IMR-90 (cell line): ENCODE measurements at regions of chr7 and their contacts with region 1.

Region 1: DNA sequence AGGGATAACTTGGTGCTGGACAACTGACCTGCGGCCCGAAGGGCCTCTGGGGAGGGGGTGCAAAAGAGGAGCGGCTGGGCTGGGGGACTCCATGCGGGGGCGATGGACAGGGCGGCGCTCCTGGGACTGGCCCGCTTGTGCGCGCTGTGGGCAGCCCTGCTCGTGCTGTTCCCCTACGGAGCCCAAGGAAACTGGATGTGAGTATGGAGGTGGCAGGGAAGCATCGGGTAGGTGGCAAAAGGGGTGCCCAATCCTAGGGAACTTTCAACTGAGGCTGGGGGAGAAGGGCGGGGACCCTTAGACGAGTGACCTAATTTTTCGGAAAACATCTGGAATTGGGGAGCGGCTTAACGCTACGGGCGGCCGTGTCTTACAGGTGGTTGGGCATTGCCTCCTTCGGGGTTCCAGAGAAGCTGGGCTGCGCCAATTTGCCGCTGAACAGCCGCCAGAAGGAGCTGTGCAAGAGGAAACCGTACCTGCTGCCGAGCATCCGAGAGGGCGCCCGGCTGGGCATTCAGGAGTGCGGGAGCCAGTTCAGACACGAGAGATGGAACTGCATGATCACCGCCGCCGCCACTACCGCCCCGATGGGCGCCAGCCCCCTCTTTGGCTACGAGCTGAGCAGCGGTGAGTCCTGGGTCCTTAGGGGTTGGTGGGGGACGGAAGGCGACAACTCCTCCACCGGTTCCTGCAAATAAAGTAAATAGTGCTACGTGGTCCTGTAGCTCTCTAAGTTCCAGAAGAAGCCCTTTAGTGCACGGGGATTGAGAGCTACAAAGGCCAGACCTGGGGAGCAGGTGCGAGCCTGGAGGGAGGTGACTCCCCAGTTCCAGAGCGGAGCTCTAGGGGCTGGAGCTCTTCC is 622 bp downstream of the WNT16 start:
- DNase-seq: no peak
- ATAC-seq: peak; percentile 57
- H3K4me3 ChIP-seq: peak overlapping the region; percentile 63
- H3K27ac ChIP-seq: no peak overlapping the region
- H3K4me1 ChIP-seq: no peaks in the 10 kb centered on the region
- H3K27me3 ChIP-seq: peaks cover 21% of the 10 kb centered on the region
- CTCF ChIP-seq: no peak; the same call in 1 of the 2 replicates
- POLR2A ChIP-seq: no peak
- RAD21 ChIP-seq: no peak

Region 2: GRCh38 chr7:120043250-120043649 is 1286.2 kb before region 1 on chr7:
- CTCF ChIA-PET with region 1: no interaction called
- POLR2A ChIA-PET with region 1: no interaction called
- dilution Hi-C with region 1: no loop called
- in situ Hi-C with region 1: no loop called
- intact Hi-C with region 1: no loop called
- DNase-seq: no peak
- ATAC-seq: no peak
- H3K4me3 ChIP-seq: no peak overlapping the region
- H3K27ac ChIP-seq: no peak overlapping the region
- H3K4me1 ChIP-seq: no peaks in the 10 kb centered on the region
- H3K27me3 ChIP-seq: no peaks in the 10 kb centered on the region
- CTCF ChIP-seq: no peak
- POLR2A ChIP-seq: no peak
- RAD21 ChIP-seq: no peak

Region 3: DNA sequence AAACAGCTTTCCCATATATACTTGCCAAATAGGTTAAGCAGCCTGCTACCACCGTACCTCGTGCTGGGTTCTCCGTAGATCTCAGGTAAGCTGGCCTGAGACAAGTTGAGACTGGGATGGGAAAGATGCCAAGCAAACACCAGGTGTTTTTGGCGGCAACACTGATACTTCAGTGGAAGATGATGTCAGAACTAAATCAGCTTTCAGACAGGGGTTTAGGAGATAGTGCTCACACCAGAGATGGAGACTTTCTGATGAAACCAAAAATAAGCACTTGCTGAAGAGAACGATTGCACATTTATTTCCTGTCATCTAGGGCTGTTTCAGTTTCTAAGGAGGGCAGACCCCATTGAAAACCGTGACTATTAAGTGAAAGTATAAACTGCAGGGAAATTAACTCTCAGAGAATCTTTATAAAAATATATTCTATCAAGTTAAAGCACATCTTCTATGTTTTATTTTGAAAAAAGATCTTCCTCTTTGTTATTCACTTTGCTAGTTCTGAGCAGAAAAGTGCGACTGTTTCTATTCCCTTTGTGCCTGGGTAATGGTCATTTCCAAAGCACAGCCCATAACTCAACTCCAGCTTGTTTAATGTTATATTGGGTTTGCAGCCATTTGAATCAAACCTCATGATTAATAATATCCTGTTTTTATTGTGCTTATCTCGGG is 191.0 kb before region 1 on chr7:
- CTCF ChIA-PET with region 1: no interaction called
- POLR2A ChIA-PET with region 1: no interaction called
- dilution Hi-C with region 1: no loop called
- in situ Hi-C with region 1: loop called (anchors 25 kb)
- intact Hi-C with region 1: no loop called
- DNase-seq: no peak
- ATAC-seq: no peak
- H3K4me3 ChIP-seq: no peak overlapping the region
- H3K27ac ChIP-seq: no peak overlapping the region
- H3K4me1 ChIP-seq: 0 out of 2 replicates have a peak, but pooled peaks cover 1% of the 10 kb centered on the region
- H3K27me3 ChIP-seq: no peaks in the 10 kb centered on the region
- CTCF ChIP-seq: no peak
- POLR2A ChIP-seq: no peak
- RAD21 ChIP-seq: no peak

Region 4: DNA sequence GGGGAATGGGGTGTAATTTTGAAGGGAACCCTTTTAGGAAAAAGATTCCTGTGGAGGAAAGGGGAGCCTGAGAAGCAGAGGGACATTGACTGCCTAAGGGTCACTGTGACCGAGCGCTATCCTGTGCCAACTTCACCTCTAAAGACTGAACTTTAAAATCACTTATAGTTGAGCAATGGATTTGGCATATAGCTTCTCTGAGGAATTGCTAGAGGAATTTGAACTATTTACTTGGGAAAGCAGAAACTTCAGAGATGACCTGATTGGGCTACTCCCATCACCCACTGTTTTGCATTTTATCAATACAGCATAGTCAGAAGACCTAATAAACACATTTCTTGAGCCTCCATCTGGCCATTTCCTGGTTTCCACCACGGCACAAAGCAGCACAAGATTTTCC is 24.3 kb before region 1 on chr7:
- CTCF ChIA-PET with region 1: interaction called, 6 read pairs
- POLR2A ChIA-PET with region 1: interaction called, 27 read pairs
- dilution Hi-C with region 1: no loop called
- in situ Hi-C with region 1: no loop called
- intact Hi-C with region 1: no loop called
- DNase-seq: peak; percentile 50
- ATAC-seq: peak; percentile 45
- H3K4me3 ChIP-seq: no peak overlapping the region
- H3K27ac ChIP-seq: peak overlapping the region; percentile 34; the same call in 1 of the 2 replicates
- H3K4me1 ChIP-seq: peaks cover 12% of the 10 kb centered on the region
- H3K27me3 ChIP-seq: no peaks in the 10 kb centered on the region
- CTCF ChIP-seq: no peak
- POLR2A ChIP-seq: no peak
- RAD21 ChIP-seq: no peak

Region 5: GRCh38 chr7:121351679-121352078 is 22.3 kb after region 1 on chr7:
- CTCF ChIA-PET with region 1: no interaction called
- POLR2A ChIA-PET with region 1: no interaction called
- dilution Hi-C with region 1: no loop called
- in situ Hi-C with region 1: no loop called
- intact Hi-C with region 1: no loop called
- DNase-seq: no peak
- ATAC-seq: no peak
- H3K4me3 ChIP-seq: no peak overlapping the region
- H3K27ac ChIP-seq: no peak overlapping the region
- H3K4me1 ChIP-seq: no peaks in the 10 kb centered on the region
- H3K27me3 ChIP-seq: no peaks in the 10 kb centered on the region
- CTCF ChIP-seq: no peak
- POLR2A ChIP-seq: no peak
- RAD21 ChIP-seq: no peak